Activated CD4-positive, alpha-beta T cell treated with anti-CD3 and anti-CD28 coated beads for 36 hours (primary cell): ENCODE measurements at regions of chr9 and their contacts with region 1.

Region 1: GRCh38 chr9:126439402-126439765 is 112.8 kb downstream of the MVB12B start:
- DNase-seq: peak; percentile 32
- ATAC-seq: peak; percentile 98
- H3K4me3 Mint-ChIP-seq: no peak overlapping the region
- H3K27ac Mint-ChIP-seq: peak overlapping the region; percentile 42
- H3K4me1 Mint-ChIP-seq: peaks cover 19% of the 10 kb centered on the region
- H3K27me3 Mint-ChIP-seq: no peaks in the 10 kb centered on the region

Region 2: DNA sequence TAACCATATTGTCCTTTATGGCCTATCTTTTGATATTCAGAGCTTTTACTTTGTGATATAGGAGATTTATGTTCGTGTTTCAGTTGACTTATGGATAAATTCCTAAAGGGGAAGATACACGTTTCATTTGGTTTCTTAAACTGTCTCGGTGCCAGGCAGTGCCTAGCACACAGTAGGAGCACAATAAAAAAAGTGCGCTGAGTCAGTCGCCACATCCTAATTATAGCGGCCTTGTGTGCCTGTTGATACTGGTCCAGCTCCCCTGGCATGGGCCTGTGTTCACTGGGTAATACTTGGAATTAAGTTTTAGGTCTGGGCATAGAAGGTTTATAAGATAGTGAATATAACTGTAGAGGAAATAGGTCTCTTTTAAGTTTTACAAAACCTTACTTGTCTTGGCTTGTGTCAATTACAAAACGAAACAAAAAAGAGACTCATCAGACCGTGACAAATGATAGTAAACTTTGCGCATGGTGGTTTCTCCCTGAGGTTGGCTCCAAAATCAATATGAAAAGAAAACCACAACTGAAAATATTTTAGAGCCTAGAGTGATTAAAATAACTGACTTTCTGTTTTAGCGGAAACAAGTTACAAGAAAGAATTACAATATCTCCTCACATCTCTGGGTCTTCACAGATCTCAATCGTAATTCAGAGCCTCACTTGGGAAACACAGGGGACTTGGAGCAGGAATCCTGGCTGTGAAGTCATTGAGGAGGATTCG is 28.0 kb before region 1 on chr9:
- CTCF ChIA-PET with region 1: no interaction called
- POLR2A ChIA-PET with region 1: no interaction called
- intact Hi-C with region 1: loop called in 1 of 2 experiments (anchors 1 kb)
- DNase-seq: peak; percentile 62
- ATAC-seq: peak; percentile 89
- H3K4me3 Mint-ChIP-seq: peak overlapping the region; percentile 54
- H3K27ac Mint-ChIP-seq: peak overlapping the region; percentile 72
- H3K4me1 Mint-ChIP-seq: peaks cover 35% of the 10 kb centered on the region
- H3K27me3 Mint-ChIP-seq: no peaks in the 10 kb centered on the region